ENCODE measurements at regions of chr3 and their contacts with region 1.

Region 1: DNA sequence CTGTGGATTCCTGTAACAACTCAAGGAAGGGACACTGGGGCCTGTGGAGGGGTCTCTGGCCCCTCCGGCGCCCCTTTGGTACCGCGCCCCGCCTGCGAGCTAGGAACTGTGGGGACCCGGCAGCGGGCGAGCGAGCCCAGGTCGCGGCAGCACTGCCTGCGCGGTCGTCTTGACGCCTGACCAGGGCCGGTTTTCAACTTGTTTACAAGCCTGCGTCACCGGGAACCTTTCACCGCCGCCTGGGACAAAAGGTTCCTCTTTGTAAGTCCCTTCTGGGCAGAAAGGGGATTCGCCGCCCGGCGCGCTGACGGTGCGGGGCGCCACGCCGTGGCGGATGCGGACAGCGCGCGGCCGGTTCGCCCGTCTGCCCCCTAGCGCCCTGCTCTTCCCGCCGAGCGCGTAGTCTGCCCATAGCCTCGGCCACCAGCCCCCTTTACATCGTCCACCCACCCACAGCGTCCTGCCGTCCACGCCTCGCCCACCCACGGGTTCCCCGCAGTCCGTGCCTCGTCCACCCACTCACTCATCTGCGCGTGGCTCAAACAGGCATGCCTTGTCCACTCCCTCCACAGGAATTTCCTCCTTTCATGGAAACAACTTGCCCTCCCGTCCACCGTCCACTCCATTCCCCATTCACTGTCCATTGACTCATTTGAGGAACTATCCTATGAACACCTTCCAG is 5.5 kb upstream of the CFAP100 start:
- DNase-seq: peak; percentile 92
- H3K4me3 ChIP-seq: peak overlapping the region; percentile 21 to 49 (median 28)
- H3K27ac ChIP-seq: peak overlapping the region; percentile 20 to 80 (median 78)
- H3K4me1 ChIP-seq: peaks cover 5 to 10% (median 5%) of the 10 kb centered on the region in 4 donors
- H3K27me3 ChIP-seq: peaks cover 7% of the 10 kb centered on the region
- CTCF ChIP-seq: peak; percentile 88 to 99 (median 93)
- EP300 ChIP-seq: peak; percentile 86
- POLR2A ChIP-seq: peak; percentile 60

Region 2: DNA sequence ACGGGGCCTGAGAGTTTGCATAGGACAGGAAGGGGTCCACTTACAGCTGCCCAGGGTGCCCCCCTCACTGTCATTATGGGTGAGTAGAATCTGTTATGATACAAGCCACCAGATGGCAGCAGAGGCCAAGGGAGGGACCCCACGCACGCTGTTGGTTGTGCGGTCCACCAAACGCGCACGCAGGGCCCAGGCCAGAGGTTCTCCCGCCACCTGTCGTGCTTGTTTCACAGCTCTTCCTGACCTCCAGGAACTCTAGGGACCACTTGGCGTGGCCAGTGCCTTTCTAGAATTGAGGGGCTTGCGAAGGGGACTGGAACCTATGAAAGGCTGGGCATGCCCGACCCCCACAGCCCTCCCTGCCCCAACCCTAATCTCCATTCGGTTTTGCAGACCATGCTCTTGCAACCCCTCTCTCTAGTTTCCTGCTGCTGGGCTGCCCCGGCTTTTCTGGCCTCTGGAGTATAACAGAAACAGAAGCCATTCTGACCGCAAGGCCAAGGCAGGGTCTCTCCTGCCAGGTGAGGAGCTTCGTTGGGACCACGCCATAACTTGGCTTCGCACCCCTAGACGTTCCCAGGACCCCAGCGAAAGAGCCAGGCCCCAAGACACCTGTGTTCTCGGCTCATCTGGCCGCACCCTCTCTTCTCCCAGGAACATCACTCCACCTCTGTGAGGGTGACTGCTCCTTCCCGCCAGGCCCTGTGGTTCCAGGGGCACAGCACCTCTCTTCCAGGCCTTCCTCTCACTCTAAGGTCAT is 254.9 kb before region 1 on chr3:
- in situ Hi-C with region 1: loop called in 3 of 4 experiments (anchors 5 to 25 kb)
- intact Hi-C with region 1: no loop called
- DNase-seq: peak; percentile 65
- H3K4me3 ChIP-seq: no peak overlapping the region
- H3K27ac ChIP-seq: no peak overlapping the region
- H3K4me1 ChIP-seq: peaks cover 0 to 2% (median 0%) of the 10 kb centered on the region in 4 donors
- H3K27me3 ChIP-seq: peaks cover 4% of the 10 kb centered on the region
- CTCF ChIP-seq: peak; percentile 74 to 84 (median 82)
- EP300 ChIP-seq: no peak
- POLR2A ChIP-seq: no peak

Region 3: GRCh38 chr3:126259411-126260391 is 129.6 kb before region 1 on chr3:
- in situ Hi-C with region 1: loop called in 3 of 4 experiments (anchors 5 to 10 kb)
- intact Hi-C with region 1: loop called (anchors 1 kb)
- DNase-seq: peak; percentile 46
- H3K4me3 ChIP-seq: no peak overlapping the region
- H3K27ac ChIP-seq: no peak overlapping the region
- H3K4me1 ChIP-seq: no peaks in the 10 kb centered on the region
- H3K27me3 ChIP-seq: no peaks in the 10 kb centered on the region
- CTCF ChIP-seq: peak; percentile 55 to 60 (median 59)
- EP300 ChIP-seq: no peak
- POLR2A ChIP-seq: no peak

Region 4: DNA sequence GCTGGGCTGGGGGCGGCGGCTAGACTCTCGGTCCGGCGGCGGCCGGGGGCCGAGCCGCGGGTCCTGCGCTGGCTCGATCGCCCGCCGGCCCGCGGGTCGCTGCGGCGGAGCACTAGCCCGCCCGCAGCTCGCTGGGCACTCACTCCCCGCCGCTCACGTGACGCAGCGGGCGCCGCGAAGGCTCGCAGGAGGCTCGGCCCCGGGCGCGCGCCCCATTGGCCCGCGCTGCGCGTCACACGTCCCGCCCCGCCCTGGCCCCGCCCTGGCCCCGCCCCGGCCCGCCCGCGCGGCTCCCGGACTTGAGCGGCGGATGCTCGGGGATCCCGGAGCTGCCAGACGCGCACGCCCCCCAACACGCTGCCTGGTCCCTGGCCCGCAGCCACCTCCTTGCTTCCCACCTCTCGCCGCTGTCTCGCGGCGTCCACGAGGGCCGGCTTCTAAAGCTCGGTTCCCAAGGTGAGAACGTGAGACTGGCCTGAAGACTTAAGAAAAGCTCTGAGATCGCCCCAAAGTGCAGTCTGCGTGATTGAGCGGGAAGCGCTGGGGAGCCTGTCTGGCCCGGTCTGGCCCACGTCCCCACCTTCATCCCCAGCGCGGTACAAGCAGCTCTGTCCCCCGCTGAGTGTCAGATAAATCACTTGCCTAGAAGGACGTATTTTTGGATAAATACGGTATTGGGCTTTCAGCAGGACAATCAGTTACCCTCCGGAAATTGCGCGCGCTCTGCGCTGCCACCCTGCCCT is 31.8 kb before region 1 on chr3 and contains the start of gene KLF15:
- in situ Hi-C with region 1: no loop called
- intact Hi-C with region 1: loop called (anchors 2 kb)
- DNase-seq: peak; percentile 89
- H3K4me3 ChIP-seq: peak within 1 kb of the TSS; percentile 61 to 89 (median 64)
- H3K27ac ChIP-seq: peak within 1 kb of the TSS; percentile 76 to 88 (median 82)
- H3K4me1 ChIP-seq: peaks cover 0 to 30% (median 18%) of the 10 kb centered on the region in 4 donors
- H3K27me3 ChIP-seq: peaks cover 59% of the 10 kb centered on the region
- CTCF ChIP-seq: no peak
- EP300 ChIP-seq: no peak
- POLR2A ChIP-seq: no peak
- total RNA-seq, gene KLF15: 4.0 to 19.5 (median 8.4) TPM